ENCODE measurements at regions of chr13 and their contacts with region 1.

Region 1: DNA sequence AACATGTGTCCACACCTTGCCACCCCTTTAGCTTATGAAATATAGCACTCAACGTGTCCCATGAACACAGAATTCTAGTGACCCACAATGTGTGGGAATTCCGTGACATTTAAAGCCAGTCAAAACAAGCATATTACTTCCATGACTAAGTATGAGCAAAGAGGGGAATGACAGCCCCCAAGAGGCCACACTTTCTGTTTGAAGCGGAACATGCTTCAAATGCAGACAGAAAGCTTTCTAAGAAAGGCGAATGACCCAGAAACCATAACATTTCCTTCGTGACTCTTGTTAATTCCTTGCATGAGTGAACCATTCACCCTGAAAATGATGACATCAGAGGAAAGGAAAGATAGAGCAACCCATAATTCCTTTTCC is 122.0 kb upstream of the FNDC3A start:
- DNase-seq: peak; percentile 53
- H3K4me3 Mint-ChIP-seq: no peak overlapping the region
- H3K27ac Mint-ChIP-seq: peak overlapping the region; percentile 31
- H3K4me1 Mint-ChIP-seq: peaks cover 37% of the 10 kb centered on the region
- H3K27me3 Mint-ChIP-seq: peaks cover 6% of the 10 kb centered on the region

Region 2: DNA sequence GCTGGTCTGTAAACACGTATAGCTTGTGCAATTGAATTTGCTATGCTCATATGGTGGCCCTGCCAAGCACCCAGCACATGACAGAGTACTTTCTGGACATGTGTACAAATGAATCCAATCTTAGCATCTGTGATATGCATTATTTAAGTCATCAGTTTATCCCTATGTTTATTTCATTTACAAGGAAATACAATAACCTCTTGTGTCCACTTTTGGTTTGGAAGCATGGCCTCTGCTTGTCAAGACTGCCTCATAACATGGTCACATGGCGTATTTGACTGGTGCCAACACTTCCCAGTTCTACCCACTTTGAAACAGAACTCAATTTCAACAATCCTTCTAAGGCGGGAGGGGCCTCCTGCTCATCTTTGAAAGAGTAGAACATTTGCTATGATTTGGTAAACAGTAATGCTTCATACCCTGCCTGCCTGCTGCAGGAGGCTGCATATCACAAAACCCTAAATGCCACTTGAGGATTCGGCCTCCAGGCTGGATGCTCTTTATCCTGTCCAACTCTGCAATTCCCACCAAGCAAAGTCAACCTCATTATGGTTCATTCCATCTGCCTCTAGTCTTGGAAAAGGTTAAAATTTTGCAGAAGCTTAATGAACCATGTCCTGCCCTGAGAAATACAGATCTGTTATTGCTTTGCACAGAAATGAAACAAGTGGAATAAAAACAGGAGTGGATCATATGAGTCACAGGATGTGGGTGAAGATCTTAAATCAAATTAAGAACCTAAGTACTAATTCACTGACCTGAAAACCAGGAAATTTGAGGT is 48.7 kb before region 1 on chr13:
- CTCF ChIA-PET with region 1: no interaction called
- POLR2A ChIA-PET with region 1: no interaction called
- intact Hi-C with region 1: loop called (anchors 2 kb)
- DNase-seq: peak; percentile 15
- H3K4me3 Mint-ChIP-seq: no peak overlapping the region
- H3K27ac Mint-ChIP-seq: peak overlapping the region; percentile 26
- H3K4me1 Mint-ChIP-seq: peaks cover 30% of the 10 kb centered on the region
- H3K27me3 Mint-ChIP-seq: no peaks in the 10 kb centered on the region

Region 3: DNA sequence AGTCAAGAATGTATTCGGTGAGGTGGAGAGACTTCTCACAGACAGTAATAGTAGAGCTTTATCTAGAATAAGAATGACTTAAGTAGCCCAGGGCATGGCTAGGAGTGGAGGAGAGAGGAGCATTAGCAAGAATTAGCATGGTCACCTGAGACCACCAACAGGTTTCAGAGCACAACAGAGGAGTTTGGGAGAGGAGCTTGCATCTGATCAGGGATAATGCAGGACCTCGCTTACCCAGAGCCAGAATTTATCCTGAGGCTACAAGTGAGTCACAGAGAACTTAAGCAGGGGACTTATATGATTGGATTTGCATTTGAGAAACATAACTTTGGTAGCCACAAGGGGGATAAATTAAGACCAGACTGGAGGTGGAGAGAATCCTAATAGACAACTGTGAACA is 19.9 kb after region 1 on chr13:
- CTCF ChIA-PET with region 1: no interaction called
- POLR2A ChIA-PET with region 1: no interaction called
- intact Hi-C with region 1: no loop called
- DNase-seq: no peak
- H3K4me3 Mint-ChIP-seq: no peak overlapping the region
- H3K27ac Mint-ChIP-seq: no peak overlapping the region
- H3K4me1 Mint-ChIP-seq: no peaks in the 10 kb centered on the region
- H3K27me3 Mint-ChIP-seq: no peaks in the 10 kb centered on the region

Region 4: GRCh38 chr13:48885027-48885395 is 31.3 kb after region 1 on chr13:
- CTCF ChIA-PET with region 1: interaction called, 3 read pairs
- POLR2A ChIA-PET with region 1: interaction called, 17 read pairs
- intact Hi-C with region 1: loop called (anchors 1 kb)
- DNase-seq: no peak
- H3K4me3 Mint-ChIP-seq: no peak overlapping the region
- H3K27ac Mint-ChIP-seq: peak overlapping the region; percentile 78
- H3K4me1 Mint-ChIP-seq: peaks cover 52% of the 10 kb centered on the region
- H3K27me3 Mint-ChIP-seq: peaks cover 3% of the 10 kb centered on the region

Region 5: DNA sequence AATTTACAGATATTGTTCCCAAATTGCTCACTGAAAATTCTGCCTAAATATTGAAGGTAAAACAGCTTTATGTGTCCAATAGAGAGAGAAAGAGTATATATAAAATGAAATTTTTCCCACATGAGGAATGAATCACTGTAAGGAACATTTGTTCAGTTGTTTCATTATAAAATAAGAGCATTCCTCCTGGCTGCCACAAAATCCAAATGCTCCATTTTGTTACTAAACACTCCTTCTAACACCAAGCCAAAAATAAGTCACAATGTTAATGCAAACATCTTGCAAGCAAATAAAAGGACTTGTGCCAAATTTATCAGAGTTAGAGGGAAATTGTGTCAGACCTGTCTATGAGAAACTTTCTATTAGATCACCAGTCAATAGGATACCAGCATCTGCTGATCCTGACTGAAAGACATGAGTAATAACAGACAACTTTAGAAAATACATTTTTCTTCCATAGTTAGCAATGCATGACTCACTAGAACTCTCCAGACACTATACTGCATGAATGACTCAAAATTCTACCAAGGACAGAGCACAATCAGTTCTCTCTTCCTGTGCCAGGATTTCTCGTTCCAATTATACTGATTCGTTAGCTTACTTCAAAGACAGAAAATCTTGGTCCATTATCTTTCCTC is 38.5 kb after region 1 on chr13:
- CTCF ChIA-PET with region 1: no interaction called
- POLR2A ChIA-PET with region 1: interaction called, 4 read pairs
- intact Hi-C with region 1: loop called (anchors 2 kb)
- DNase-seq: no peak
- H3K4me3 Mint-ChIP-seq: no peak overlapping the region
- H3K27ac Mint-ChIP-seq: peak overlapping the region; percentile 49
- H3K4me1 Mint-ChIP-seq: peaks cover 36% of the 10 kb centered on the region
- H3K27me3 Mint-ChIP-seq: peaks cover 3% of the 10 kb centered on the region

Measured in activated CD4-positive, alpha-beta memory T cell treated with anti-CD3 and anti-CD28 coated beads for 36 hours (primary cell).